ENCODE measurements at regions of chr1 and their contacts with region 1.

Region 1: DNA sequence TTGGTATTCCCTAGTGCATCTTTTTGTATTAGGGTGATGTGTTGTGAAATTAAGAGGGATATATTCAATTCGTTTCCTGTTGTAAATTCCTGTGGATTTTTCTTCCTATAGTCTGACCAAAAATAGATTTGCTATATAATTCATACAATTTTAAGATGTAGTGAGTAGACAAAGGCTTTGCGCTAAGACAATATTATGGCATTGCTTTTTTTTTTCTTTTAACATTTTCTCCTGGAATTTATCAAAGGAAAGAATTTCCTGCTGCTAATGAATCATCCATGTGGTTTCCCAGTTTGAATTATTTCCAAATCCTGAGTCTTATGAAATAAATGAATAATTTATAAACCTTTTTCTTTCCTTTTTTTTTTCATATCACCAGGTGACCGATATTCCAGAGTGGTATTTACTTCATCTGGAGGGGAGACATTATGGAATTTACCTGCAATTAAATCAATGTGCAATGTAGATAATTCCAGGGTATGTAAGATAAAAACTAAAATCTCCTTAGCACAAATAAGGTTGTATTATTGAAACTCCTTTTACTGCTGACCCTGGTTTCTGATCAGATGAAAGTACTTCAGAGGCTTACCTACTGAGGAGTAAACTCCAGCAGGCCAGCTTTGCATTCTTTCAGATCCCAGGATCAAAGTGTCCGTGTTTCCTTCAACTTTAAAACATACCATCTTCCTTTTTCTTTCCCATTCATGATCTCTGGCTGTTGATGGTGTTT is 148.4 kb downstream of the TLR5 start:
- DNase-seq: no peak
- H3K4me3 ChIP-seq: peak overlapping the region in 1 of 4 donors; percentile 1
- H3K27ac ChIP-seq: peak overlapping the region; percentile 35 to 59 (median 42)
- H3K4me1 ChIP-seq: peaks cover 31 to 45% of the 10 kb centered on the region in 2 donors
- H3K27me3 ChIP-seq: no peaks in the 10 kb centered on the region
- CTCF ChIP-seq: no peak
- POLR2A ChIP-seq: no peak

Region 2: DNA sequence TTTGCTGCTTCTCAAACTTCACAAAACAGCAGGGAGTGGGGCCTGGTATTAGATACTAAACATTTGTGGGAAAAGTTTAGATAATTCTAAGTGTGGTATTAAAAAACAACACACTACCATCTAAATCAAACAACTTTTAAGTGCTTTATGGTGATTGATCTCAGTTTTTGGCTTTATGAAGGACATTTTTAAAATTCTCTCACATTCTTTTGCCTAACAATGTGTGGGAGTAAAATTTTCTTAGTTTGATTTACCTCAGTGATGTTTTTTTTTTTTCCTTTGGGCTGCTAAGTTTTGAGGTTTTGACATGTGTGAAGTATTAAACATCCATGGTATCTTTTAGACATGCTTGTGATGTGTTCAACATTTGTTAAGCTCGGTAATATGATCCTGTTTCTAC is 63.6 kb before region 1 on chr1:
- intact Hi-C with region 1: loop called in 1 of 2 experiments (anchors 10 kb)
- DNase-seq: no peak
- H3K4me3 ChIP-seq: no peak overlapping the region
- H3K27ac ChIP-seq: no peak overlapping the region
- H3K4me1 ChIP-seq: peaks cover 21 to 31% of the 10 kb centered on the region in 2 donors
- H3K27me3 ChIP-seq: no peaks in the 10 kb centered on the region
- CTCF ChIP-seq: no peak
- POLR2A ChIP-seq: no peak